Lower leg skin (tissue), 4 donors: ENCODE measurements at regions of chr7 and their contacts with region 1.

Region 1: DNA sequence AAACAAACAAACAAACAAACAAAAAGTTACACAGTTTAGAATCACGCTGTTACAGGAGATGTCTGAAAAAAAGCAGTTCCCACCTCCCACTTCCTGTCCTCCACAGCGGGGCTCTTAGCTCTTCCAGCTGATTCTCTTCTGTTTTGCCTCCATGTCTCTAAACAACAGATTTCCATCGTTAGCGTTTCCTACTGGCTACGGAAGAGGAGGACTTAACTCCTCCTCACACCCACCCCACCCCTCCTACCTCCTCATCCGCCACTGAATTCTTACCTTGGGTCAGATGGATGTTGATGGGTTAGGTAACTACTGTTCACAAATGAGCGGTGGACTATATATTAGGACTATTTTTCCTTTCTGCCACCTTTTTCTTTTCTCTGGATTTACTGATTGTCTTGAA is 36.8 kb upstream of the NUB1 start:
- DNase-seq: peak in 1 of 2 donors; percentile 3
- H3K4me3 ChIP-seq: no peak overlapping the region
- CTCF ChIP-seq: no peak
- POLR2A ChIP-seq: no peak

Region 2: GRCh38 chr7:151104411-151105235 is 200.2 kb before region 1 on chr7:
- intact Hi-C with region 1: no loop called
- DNase-seq: peak in 1 of 2 donors; percentile 15
- H3K4me3 ChIP-seq: no peak overlapping the region
- CTCF ChIP-seq: no peak
- POLR2A ChIP-seq: no peak

Region 3: DNA sequence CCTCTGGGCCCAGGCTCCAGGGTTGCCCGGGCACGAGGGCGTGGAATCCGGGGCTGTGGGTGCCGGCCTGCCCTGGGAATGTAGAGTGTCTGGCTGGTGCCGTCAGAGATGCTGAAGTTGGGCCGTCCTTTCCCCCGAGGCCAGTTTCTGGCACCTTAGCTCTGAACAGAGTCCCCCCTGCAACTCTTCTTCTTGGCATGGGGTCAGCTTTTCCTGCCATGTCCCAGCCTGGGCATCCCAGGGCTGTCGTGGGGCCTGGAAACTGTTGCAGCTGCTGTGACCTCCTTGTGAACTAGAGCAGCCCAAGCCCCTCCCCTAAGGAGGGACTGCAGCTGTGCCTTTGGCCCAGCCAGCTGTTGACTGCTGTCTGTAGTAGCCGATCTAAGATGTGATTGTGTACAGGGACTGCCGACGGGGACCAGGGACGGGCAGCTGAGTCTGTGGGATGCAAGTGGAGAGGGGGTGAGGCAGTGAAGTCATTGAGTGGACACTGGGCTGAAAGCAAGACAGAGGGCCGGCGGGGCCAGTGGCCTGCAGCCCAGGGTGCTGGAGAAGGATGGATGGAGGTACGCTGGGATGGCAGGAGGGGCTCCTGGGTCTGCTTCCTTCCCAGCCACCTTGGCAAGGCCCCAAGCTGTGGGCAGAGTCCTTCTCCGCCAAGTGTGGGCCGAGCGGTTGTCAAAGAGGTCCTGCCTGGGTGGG is 173.1 kb before region 1 on chr7:
- intact Hi-C with region 1: loop called (anchors 5 kb)
- DNase-seq: no peak
- H3K4me3 ChIP-seq: no peak overlapping the region
- CTCF ChIP-seq: no peak
- POLR2A ChIP-seq: no peak

Region 4: DNA sequence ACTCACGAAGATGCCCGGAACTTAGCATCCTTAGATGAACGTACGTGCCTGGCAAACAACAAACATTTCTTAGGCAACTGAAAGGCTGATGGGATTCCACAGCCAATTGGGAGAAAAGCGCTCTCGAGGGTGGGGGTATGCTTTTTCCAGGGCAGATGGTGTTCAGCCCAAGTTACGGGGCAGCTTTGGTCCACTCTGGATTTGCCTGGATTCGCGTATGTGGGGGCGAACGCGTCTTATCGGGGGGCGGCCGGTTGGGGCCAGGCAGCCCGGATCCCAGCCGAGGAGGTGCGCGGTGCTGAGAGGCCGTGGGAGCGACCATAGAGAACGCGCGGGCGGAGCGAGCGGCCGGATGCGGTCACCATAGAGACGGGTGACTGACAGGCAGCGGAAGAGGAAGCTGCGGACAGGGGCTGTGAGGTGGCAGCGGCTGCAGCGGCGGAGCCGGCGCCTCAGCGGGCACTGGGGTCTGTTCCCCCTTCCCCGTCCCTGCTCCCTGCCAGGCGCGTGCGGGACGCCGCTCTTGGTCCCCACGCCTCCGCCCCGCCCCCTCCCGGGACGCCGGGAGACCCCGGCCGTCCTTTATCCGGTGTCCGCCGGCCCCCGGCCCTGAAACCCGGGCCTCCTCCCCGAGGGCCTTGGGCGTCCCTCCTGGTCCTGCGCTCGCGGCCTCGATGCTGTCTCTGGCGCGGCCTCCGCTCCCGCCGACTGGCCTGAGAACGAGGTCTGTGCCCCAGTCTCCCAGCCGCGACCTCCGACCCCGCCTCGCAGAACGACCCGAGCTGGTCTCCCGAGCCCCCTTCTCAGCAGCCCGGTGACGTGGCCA is 72.6 kb before region 1 on chr7 and contains the start of gene CHPF2:
- intact Hi-C with region 1: no loop called
- DNase-seq: peak; percentile 89 to 98
- H3K4me3 ChIP-seq: peak within 1 kb of the TSS; percentile 95
- CTCF ChIP-seq: no peak
- POLR2A ChIP-seq: peak in 1 of 2 donors; percentile 34
- total RNA-seq, gene CHPF2: 15.4 to 32.2 (median 26.7) TPM

Region 5: GRCh38 chr7:151248346-151249033 is 56.4 kb before region 1 on chr7 and contains the start of gene SMARCD3:
- intact Hi-C with region 1: no loop called
- DNase-seq: no peak
- H3K4me3 ChIP-seq: peak within 1 kb of the TSS; percentile 29
- CTCF ChIP-seq: no peak
- POLR2A ChIP-seq: no peak
- total RNA-seq, gene SMARCD3: 4.8 to 19.8 (median 13.5) TPM